ENCODE measurements at regions of chr12 and their contacts with region 1.

Region 1: DNA sequence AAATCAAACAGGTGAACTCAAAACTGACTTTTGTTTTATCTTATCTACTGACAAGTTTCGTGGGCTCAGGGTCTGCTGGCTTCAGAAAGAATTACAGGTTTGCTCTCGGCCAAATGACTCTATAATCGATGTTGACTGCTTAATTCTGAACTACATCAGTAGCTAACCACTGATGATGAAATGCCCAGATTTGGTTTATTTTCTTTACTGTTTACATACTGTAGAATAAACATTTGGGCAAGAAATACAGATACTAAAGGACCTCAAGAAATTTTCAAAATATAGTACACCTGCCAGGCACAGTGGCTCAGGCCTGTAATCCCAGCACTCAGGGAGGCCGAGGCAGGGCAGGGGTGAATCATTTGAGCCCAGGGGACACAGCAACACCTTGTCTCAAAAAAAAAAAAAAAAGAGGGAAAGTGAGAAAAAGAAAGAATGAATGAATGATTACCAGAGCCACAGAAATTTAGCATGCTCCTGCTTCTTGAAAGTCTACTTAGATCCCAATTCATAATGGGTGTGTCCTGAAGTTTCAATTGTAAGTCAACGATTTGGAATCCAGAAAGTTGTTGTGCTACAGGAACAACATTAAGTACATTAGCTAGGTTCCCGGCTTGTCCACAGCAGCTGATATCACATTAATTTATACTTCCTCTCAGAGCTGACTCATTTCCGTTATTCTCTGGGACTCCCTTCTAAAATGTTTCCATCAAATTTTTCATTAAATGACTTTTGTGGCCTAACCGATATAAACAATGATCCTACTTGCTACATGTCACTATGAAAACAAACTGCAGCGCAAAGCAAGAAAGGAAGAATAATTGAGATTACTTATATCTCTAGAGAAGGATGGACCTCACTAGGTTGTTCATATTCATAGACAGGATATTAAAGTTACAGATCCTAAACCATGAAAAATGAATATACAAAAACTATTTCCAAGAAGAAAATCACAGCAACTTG is 134.3 kb downstream of the MED13L start:
- DNase-seq: no peak

Region 2: DNA sequence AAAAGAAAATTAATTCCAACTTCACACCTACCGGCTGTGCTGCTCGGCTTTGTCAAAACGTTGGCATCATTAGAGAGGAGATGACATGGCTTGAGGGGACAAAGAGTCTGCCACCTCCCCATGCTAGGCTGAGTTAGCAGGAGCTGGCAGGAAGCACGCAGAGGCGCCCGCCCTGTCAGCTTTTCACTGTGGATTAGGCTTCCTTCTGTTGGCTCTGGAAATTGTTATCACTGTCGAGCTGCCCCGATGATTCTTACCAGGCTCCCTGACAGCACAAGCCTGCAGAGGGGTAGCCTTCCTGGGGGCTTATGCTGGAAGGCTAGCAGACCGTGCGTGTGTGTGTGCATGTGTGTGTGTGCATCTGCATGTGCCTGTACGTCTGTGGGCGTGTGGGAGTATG is 968.3 kb before region 1 on chr12:
- intact Hi-C with region 1: no loop called
- DNase-seq: no peak

Region 3: GRCh38 chr12:116236148-116236731 is 93.0 kb after region 1 on chr12:
- intact Hi-C with region 1: loop called (anchors 5 kb)
- DNase-seq: no peak

Region 4: GRCh38 chr12:117060246-117060928 is 917.2 kb after region 1 on chr12:
- intact Hi-C with region 1: no loop called
- DNase-seq: no peak